GM12878 (cell line): ENCODE measurements at regions of chr22 and their contacts with region 1.

Region 1: GRCh38 chr22:43346521-43346929 is 3.4 kb upstream of the SCUBE1 start:
- DNase-seq: no peak
- ATAC-seq: peak; percentile 95
- H3K4me3 ChIP-seq: no peak overlapping the region
- H3K27ac ChIP-seq: no peak overlapping the region
- H3K4me1 ChIP-seq: peaks cover 7% of the 10 kb centered on the region
- H3K27me3 ChIP-seq: peaks cover 7% of the 10 kb centered on the region in 2 experiments; a peak in 3 of 4 replicates
- CTCF ChIP-seq: peak; percentile 69 to 80 (median 70)
- EP300 ChIP-seq: no peak
- POLR2A ChIP-seq: no peak
- RAD21 ChIP-seq: peak; percentile 54

Region 2: GRCh38 chr22:43377896-43378704 is 31.6 kb after region 1 on chr22:
- CTCF ChIA-PET with region 1: interaction called, 13 read pairs
- POLR2A ChIA-PET with region 1: no interaction called
- RAD21 ChIA-PET with region 1: interaction called, 5 read pairs
- SMC1A ChIA-PET with region 1: interaction called, 5 read pairs
- in situ Hi-C with region 1: no loop called
- intact Hi-C with region 1: no loop called
- DNase-seq: peak; percentile 63
- ATAC-seq: peak; percentile 79
- H3K4me3 ChIP-seq: peak overlapping the region; percentile 34; the same call in 1 of the 2 replicates
- H3K27ac ChIP-seq: peak overlapping the region; percentile 45; the same call in 1 of the 2 replicates
- H3K4me1 ChIP-seq: peaks cover 27% of the 10 kb centered on the region
- H3K27me3 ChIP-seq: peaks cover 0 to 2% of the 10 kb centered on the region in 2 experiments; a peak in 2 of 4 replicates
- CTCF ChIP-seq: no peak
- EP300 ChIP-seq: 0 out of 4 replicates have a peak, but pooled peaks of 1 of the 2 experiments have one; percentile 66
- POLR2A ChIP-seq: no peak
- RAD21 ChIP-seq: no peak